A673 (cell line): ENCODE measurements at regions of chr15 and their contacts with region 1.

Region 1: DNA sequence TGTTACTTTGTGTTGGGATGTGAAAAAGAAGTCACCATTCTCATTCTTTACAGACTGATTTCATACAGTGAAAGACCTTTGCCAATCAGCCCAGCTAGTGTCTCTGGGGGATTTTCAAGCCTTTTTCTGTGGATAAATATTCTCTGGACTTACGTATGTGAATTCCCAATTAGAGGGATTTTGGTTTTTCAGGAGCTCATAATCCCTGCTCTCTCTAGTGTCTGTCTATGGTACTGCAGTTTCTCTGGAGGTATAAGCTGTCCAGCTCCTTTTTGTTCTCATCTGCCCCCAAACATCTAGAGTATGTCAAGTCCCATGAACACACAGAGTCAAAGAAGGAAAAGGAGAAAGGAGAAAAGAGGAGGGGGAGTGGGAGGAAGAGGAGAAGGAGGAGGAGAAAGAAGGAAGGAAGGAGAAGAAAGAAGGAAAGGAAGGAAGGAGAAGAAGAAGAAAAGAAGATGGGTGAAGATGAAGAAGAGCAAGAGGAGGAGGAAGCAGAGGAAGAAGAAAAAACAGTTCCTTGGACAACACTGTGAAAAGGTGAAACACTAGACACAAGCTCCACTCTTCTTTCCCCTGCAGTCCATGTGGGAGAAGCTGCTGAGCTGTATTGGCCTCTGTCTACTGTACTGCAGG is 218.6 kb downstream of the GREM1 start:
- DNase-seq: peak; percentile 54
- H3K4me3 ChIP-seq: no peak overlapping the region
- H3K27ac ChIP-seq: no peak overlapping the region
- H3K4me1 ChIP-seq: no peaks in the 10 kb centered on the region
- H3K27me3 ChIP-seq: no peaks in the 10 kb centered on the region
- CTCF ChIP-seq: peak; percentile 69

Region 2: GRCh38 chr15:32657198-32657883 is 279.1 kb before region 1 on chr15:
- CTCF ChIA-PET with region 1: interaction called, 16 read pairs
- POLR2A ChIA-PET with region 1: no interaction called
- intact Hi-C with region 1: loop called (anchors 5 kb)
- DNase-seq: no peak
- H3K4me3 ChIP-seq: no peak overlapping the region
- H3K27ac ChIP-seq: no peak overlapping the region
- H3K4me1 ChIP-seq: no peaks in the 10 kb centered on the region
- H3K27me3 ChIP-seq: no peaks in the 10 kb centered on the region
- CTCF ChIP-seq: no peak

Region 3: DNA sequence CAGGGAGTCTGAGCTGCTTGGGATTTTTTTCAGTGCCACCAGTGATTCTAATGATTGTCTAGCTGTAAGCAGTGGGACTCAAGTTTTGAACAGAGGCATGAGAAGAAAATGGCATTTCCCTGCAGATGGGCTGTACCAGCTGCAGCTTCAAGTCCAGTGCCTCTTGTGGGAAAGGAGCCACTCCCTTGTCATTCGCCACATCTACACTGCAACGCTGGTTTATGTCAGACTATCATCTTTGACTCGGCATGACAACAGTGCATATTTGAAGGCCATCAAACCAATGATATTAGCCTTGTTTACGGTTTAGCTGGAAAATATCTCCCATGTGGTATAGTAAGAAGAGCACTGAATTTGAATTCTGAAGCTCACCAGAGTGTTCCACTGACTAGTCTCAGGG is 272.7 kb before region 1 on chr15:
- CTCF ChIA-PET with region 1: interaction called, 16 read pairs
- POLR2A ChIA-PET with region 1: no interaction called
- intact Hi-C with region 1: loop called (anchors 5 kb)
- DNase-seq: no peak
- H3K4me3 ChIP-seq: no peak overlapping the region
- H3K27ac ChIP-seq: no peak overlapping the region
- H3K4me1 ChIP-seq: no peaks in the 10 kb centered on the region
- H3K27me3 ChIP-seq: no peaks in the 10 kb centered on the region
- CTCF ChIP-seq: no peak

Region 4: DNA sequence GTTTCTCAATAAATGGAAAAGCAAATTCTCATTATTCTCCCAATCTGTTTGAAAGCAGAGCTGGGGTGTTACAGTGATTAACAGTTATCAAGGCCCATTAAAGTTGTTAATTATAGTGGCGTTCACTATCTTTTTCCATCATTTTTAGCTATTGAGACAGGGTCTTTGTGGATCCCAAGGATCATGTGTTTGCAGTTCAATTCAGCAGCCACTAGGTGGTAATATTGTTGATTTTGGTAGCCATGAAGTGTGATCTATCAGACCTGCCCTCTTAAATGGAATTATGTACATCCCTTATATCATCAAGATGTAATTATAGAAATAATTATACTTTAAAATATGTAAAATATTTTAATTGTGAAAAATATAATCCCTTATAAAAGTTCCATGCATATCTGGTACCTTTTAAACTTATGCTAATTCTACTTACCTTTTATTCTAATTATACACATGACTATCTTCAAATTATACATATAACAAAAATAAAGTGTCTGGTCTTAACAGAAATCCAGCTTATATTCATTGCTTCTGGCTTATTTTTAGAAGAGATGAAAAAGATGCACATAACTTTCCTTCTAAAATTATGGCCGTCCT is 92.2 kb before region 1 on chr15:
- CTCF ChIA-PET with region 1: interaction called, 41 read pairs
- POLR2A ChIA-PET with region 1: interaction called, 3 read pairs
- intact Hi-C with region 1: loop called (anchors 5 kb)
- DNase-seq: peak; percentile 59
- H3K4me3 ChIP-seq: no peak overlapping the region
- H3K27ac ChIP-seq: no peak overlapping the region
- H3K4me1 ChIP-seq: peaks cover 6% of the 10 kb centered on the region
- H3K27me3 ChIP-seq: peaks cover 13% of the 10 kb centered on the region
- CTCF ChIP-seq: peak; percentile 77